ENCODE measurements at regions of chr6 and their contacts with region 1.

Region 1: DNA sequence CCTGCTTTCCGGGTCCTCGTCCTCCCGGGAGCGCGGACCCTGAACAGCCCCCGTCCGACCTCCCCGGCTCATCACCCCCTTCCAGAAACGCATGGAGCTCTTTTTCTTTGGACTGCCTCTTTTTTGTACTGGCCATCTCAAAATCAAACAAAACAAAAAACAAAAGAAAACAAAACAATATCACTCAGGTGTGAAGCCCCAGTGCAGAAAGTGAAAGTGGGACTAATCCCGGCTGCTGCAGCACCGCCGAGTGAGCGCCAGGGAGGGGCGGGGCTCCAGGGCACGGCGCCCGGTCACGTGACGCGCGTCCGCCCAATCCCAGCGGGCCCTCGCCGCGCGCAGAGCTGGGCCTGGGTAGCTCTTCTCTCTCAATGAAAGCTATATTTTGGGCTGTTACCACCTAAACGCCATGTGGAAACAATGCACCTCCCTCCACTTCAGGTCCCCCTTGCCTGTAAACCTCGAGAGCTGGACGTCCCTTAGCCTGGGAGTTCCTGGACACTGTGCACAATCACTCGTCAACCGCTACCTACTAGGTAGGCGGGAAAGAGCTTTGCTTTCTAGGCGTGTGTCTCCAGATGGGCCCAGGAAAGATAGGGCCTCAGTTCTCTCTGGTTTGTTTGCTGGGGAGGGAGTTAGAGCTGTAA is 93.7 kb upstream of the PRDM1 start:
- DNase-seq: peak; percentile 92
- ATAC-seq: peak; percentile 90
- H3K4me3 Mint-ChIP-seq: peak overlapping the region; percentile 95
- H3K27ac Mint-ChIP-seq: peak overlapping the region; percentile 90
- H3K4me1 Mint-ChIP-seq: peaks cover 49% of the 10 kb centered on the region
- H3K27me3 Mint-ChIP-seq: peaks cover 64% of the 10 kb centered on the region

Region 2: DNA sequence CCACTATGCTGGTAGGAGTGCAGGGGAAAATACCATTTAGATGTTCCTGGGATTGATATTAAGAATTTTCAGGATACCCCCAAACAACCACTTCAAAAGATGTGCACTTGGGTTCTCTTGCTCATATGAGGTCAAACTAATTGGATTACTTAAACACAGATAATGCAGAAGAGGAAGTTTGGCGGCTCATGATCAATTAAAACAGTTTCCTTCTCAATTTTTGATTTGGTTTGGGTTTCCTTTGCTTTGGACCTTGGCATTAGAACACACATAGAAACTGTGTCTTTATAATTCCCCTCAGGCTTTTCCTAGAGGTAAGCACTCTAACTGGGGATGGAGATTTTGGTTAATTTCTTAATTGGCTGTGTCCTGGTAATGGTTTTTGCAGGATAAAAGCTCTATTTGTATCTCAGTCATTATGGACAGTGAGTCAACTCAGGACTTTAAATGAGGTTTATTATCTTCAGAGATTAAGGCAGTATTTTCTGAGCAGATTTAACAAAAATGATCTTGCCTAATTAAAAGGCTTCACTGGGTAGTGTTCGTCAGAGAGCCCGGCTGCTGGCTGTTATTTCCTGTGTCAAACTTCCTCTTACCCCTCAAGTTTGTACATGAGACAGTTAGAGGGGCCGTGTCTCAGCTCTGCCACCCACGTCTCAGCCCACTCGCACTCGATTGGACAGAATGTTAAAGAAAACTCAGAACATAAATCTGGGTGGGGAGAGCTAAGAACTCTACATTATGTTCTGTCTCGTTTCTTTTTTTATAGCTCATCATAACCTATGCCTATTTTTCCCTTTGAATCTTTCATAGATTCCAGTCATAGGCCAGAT is 539.3 kb before region 1 on chr6:
- CTCF ChIA-PET with region 1: interaction called, 11 read pairs
- POLR2A ChIA-PET with region 1: no interaction called
- DNase-seq: peak; percentile 59
- ATAC-seq: peak; percentile 93
- H3K4me3 Mint-ChIP-seq: peak overlapping the region; percentile 45
- H3K27ac Mint-ChIP-seq: peak overlapping the region; percentile 72
- H3K4me1 Mint-ChIP-seq: peaks cover 17% of the 10 kb centered on the region
- H3K27me3 Mint-ChIP-seq: peaks cover 4% of the 10 kb centered on the region

Region 3: GRCh38 chr6:105759946-105760345 is 232.5 kb before region 1 on chr6:
- CTCF ChIA-PET with region 1: no interaction called
- POLR2A ChIA-PET with region 1: no interaction called
- DNase-seq: no peak
- ATAC-seq: no peak
- H3K4me3 Mint-ChIP-seq: no peak overlapping the region
- H3K27ac Mint-ChIP-seq: no peak overlapping the region
- H3K4me1 Mint-ChIP-seq: peaks cover 17% of the 10 kb centered on the region
- H3K27me3 Mint-ChIP-seq: peaks cover 11% of the 10 kb centered on the region

Region 4: GRCh38 chr6:105941621-105942412 is 50.6 kb before region 1 on chr6:
- CTCF ChIA-PET with region 1: no interaction called
- POLR2A ChIA-PET with region 1: no interaction called
- DNase-seq: no peak
- ATAC-seq: no peak
- H3K4me3 Mint-ChIP-seq: no peak overlapping the region
- H3K27ac Mint-ChIP-seq: no peak overlapping the region
- H3K4me1 Mint-ChIP-seq: peaks cover 4% of the 10 kb centered on the region
- H3K27me3 Mint-ChIP-seq: peaks cover 23% of the 10 kb centered on the region

Region 5: GRCh38 chr6:105981002-105981887 is 11.2 kb before region 1 on chr6:
- CTCF ChIA-PET with region 1: interaction called, 28 read pairs
- POLR2A ChIA-PET with region 1: interaction called, 27 read pairs
- DNase-seq: peak; percentile 53
- ATAC-seq: peak; percentile 79
- H3K4me3 Mint-ChIP-seq: peak overlapping the region; percentile 84
- H3K27ac Mint-ChIP-seq: peak overlapping the region; percentile 92
- H3K4me1 Mint-ChIP-seq: peaks cover 70% of the 10 kb centered on the region
- H3K27me3 Mint-ChIP-seq: peaks cover 24% of the 10 kb centered on the region

Region 6: DNA sequence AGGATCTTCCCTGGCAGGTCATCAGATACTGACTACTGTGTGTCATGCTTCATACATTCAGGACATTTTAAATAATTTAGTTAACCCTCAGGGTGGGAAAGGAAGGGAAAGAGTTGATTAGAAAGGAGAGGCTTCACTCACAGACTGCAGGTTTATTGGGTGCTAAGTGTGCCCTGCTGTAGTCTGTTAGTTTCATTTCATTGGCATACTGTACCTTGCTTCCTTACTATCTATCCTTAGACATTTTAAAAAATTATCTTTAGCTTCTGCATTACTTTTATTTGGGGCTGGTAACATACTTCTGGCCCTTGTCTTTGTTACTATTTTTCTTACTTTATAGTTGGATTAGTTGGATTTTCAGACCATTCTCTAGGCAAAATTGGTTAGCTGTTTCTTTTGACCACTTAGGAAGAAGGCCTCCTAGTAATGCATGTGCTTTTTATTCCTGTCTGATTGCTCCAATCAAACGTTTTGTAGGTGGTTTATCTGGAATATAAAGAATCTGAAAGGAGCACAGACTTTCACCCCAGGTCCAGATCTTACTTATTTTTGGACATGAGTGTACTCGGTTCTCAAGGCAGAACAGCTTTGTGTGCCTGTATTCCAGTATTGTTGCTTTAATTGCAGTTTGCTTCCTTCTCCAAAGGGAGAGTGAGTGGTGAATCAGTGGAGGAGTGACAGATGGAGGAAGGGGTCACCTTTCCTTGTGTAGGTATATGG is 11.0 kb after region 1 on chr6:
- CTCF ChIA-PET with region 1: no interaction called
- POLR2A ChIA-PET with region 1: no interaction called
- DNase-seq: no peak
- ATAC-seq: no peak
- H3K4me3 Mint-ChIP-seq: no peak overlapping the region
- H3K27ac Mint-ChIP-seq: no peak overlapping the region
- H3K4me1 Mint-ChIP-seq: no peaks in the 10 kb centered on the region
- H3K27me3 Mint-ChIP-seq: peaks cover 52% of the 10 kb centered on the region

Region 7: DNA sequence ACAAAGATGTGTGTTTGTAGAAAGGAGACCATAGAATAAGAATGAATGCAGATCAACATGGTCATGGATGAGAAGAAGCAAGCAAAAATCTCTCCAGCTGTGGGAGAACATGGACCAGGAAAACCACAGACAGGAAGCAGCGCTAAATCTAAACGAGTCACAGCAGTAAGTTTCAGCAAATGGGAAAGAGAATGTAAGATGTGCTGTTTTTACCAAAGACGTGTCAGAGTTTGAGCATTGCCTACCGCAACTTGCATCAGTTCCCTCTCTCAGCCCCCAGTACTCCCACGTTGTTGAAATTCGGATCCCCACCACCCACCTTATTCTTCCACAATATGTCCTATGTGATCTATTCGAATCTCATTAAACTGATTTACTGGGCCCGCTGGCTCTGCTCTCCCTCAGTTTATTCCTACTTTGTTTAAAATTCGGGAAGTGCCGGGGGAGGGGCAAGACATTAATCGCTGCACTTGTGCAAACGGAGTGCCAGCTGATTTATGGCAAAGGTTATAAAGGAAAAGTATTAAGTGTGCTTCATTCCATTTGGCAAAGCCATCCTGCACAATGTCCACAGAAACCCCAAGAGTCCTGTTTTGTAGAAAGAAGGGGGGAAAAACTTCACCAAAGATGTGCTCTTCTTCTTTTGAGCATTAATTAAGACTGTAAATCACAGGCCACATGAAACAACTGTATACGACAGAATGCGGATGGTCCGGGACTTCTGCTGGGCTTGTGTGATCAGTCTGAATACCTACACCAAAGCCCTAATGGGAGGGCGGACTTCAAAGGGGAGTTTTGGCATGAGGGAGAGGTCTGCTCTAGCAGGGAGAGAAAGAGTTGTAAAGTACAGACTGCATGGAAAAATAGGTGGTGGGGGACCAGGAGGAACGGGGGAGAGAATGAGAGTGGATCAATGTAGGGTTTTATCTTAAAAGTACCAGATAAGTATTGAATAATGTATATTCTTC is 34.6 kb after region 1 on chr6:
- CTCF ChIA-PET with region 1: no interaction called
- POLR2A ChIA-PET with region 1: no interaction called
- DNase-seq: no peak
- ATAC-seq: no peak
- H3K4me3 Mint-ChIP-seq: no peak overlapping the region
- H3K27ac Mint-ChIP-seq: no peak overlapping the region
- H3K4me1 Mint-ChIP-seq: peaks cover 10% of the 10 kb centered on the region
- H3K27me3 Mint-ChIP-seq: peaks cover 27% of the 10 kb centered on the region

Region 8: DNA sequence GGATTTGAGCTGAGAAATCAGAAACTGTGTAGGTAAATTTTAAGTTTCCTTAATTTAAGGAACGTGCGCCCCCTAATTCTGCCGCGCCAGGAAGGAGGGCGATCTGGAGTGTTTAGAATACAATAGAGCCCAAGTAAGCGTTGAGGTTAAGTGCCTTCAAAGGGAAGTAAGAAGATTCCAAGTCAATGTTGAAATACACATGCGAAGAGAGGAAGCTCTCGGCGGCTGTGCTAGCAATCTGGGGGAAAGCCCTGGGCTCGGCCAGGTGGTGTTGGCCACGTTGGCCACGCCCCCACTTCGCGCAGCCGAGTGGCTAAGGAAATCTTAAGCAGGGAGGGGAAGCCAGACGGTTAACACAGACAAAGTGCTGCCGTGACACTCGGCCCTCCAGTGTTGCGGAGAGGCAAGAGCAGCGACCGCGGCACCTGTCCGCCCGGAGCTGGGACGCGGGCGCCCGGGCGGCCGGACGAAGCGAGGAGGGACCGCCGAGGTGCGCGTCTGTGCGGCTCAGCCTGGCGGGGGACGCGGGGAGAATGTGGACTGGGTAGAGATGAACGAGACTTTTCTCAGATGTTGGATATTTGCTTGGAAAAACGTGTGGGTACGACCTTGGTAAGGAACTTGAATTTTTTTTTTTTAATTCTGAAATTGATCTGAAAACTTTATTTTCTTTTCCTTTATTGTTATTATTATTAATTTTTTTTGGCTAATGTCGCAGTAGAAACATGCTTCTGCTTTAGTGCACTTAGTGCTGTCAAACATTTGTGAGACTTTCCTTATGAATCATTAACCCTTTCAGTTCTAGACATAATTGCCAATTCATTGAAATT is 93.8 kb after region 1 on chr6 and contains the start of gene PRDM1:
- CTCF ChIA-PET with region 1: interaction called, 11 read pairs
- POLR2A ChIA-PET with region 1: interaction called, 3 read pairs
- DNase-seq: peak; percentile 87
- ATAC-seq: peak; percentile 96
- H3K4me3 Mint-ChIP-seq: peak within 1 kb of the TSS; percentile 84
- H3K27ac Mint-ChIP-seq: peak within 1 kb of the TSS; percentile 70
- H3K4me1 Mint-ChIP-seq: peaks cover 70% of the 10 kb centered on the region
- H3K27me3 Mint-ChIP-seq: peaks cover 30% of the 10 kb centered on the region
- total RNA-seq, gene PRDM1: 14.4 to 14.7 TPM

Measured in activated CD8-positive, alpha-beta T cell treated with anti-CD3 and anti-CD28 coated beads, Interleukin-2, amount 10 ng/mL, durations not matched to agents 7 days and 5 days (primary cell).